CD8-positive, alpha-beta memory T cell (primary cell): ENCODE measurements at regions of chr1 and their contacts with region 1.

Region 1: DNA sequence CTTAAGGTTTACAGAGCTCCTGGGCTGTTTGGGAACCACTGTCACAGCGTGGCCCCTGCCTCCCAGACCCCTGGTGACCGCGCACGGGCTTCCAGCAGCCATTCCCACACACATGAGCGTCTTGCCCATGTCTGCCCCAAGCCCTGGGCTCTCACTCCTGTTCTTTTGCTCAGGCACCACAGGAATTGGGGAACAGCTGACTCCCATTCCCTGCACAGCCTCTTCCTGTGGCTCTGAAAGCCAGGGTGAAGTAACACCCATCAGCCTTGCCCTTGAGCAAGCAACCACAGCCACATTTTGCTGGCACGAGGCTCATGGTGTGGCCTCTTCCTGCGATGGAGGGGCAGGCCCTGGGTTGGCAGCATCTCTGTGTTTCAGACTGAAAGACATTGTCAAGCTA is 14.3 kb upstream of the GPR157 start:
- DNase-seq: no peak
- H3K4me3 ChIP-seq: no peak overlapping the region
- H3K4me3 Mint-ChIP-seq: no peak overlapping the region
- H3K27ac ChIP-seq: no peak overlapping the region
- H3K27ac Mint-ChIP-seq: no peak overlapping the region
- H3K4me1 ChIP-seq: no peaks in the 10 kb centered on the region
- H3K4me1 Mint-ChIP-seq: peaks cover 4 to 5% (median 4%) of the 10 kb centered on the region in 3 donors
- H3K27me3 ChIP-seq: no peaks in the 10 kb centered on the region
- H3K27me3 Mint-ChIP-seq: peaks cover 3 to 5% of the 10 kb centered on the region in 2 donors

Region 2: DNA sequence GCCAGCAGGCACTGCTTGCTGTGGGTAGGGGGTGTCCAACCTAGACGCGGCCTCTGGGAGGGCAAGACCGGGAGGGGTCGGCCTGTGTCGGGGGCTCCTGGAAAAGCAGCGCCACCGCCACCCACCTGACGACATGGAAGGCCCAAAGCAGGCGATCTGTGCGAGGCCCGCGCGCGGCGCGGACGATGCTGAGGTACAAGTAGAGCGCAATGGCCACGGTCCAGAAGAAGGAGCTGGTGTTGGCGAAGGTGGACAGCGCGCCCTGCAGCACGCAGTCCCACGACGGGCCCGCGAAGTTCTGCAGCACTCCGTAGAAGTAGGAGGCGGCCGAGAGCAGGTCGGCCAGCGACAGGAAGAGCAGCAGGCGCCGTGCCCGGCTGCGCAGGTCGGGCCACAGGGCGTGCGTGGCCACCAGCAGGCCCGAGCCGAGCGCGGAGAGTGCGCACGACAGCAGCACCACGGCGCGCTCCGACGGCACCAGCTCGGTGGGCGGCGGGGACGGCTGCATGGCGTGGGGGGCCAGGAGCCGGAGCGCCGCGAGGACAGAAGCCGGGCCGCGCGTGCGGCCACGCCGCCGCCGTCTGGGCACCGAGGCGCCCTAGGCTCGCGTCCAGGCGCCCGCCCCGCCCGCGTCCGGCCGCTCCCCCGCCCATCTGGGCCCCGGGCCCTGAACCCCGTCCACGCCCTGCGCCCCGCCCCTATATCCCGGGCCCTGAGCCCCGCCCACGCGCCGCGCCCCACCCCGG is 14.6 kb before region 1 on chr1 and contains the start of gene GPR157:
- CTCF ChIA-PET with region 1: interaction called, 16 read pairs
- POLR2A ChIA-PET with region 1: interaction called, 4 read pairs
- DNase-seq: peak; percentile 57 to 87 (median 77)
- H3K4me3 ChIP-seq: peak within 1 kb of the TSS; percentile 63
- H3K4me3 Mint-ChIP-seq: peak within 1 kb of the TSS; percentile 83 to 91 (median 90)
- H3K27ac ChIP-seq: no peak within 1 kb of the TSS
- H3K27ac Mint-ChIP-seq: peak within 1 kb of the TSS; percentile 42 to 86 (median 84)
- H3K4me1 ChIP-seq: peaks cover 18% of the 10 kb centered on the region
- H3K4me1 Mint-ChIP-seq: peaks cover 18 to 41% (median 30%) of the 10 kb centered on the region in 3 donors
- H3K27me3 ChIP-seq: no peaks in the 10 kb centered on the region
- H3K27me3 Mint-ChIP-seq: no peaks in the 10 kb centered on the region
- total RNA-seq, gene GPR157: 3.1 to 4.7 TPM

Region 3: GRCh38 chr1:9630331-9631111 is 487.3 kb after region 1 on chr1:
- CTCF ChIA-PET with region 1: no interaction called
- POLR2A ChIA-PET with region 1: no interaction called
- DNase-seq: peak in 1 of 5 donors; percentile 60
- H3K4me3 ChIP-seq: peak overlapping the region; percentile 94
- H3K4me3 Mint-ChIP-seq: peak overlapping the region; percentile 89 to 98 (median 97)
- H3K27ac ChIP-seq: peak overlapping the region; percentile 76
- H3K27ac Mint-ChIP-seq: peak overlapping the region; percentile 87 to 98 (median 93)
- H3K4me1 ChIP-seq: peaks cover 68% of the 10 kb centered on the region
- H3K4me1 Mint-ChIP-seq: peaks cover 55 to 90% (median 80%) of the 10 kb centered on the region in 3 donors
- H3K27me3 ChIP-seq: no peaks in the 10 kb centered on the region
- H3K27me3 Mint-ChIP-seq: no peaks in the 10 kb centered on the region